ENCODE measurements at regions of chr6 and their contacts with region 1.

Region 1: GRCh38 chr6:142946181-142946923 is 1.4 kb upstream of the HIVEP2 start:
- DNase-seq: peak; percentile 81
- H3K4me3 Mint-ChIP-seq: peak overlapping the region; percentile 92
- H3K27ac Mint-ChIP-seq: peak overlapping the region; percentile 97
- H3K4me1 Mint-ChIP-seq: peaks cover 43% of the 10 kb centered on the region
- H3K27me3 Mint-ChIP-seq: peaks cover 6% of the 10 kb centered on the region

Region 2: GRCh38 chr6:142692942-142693341 is 253.4 kb before region 1 on chr6:
- intact Hi-C with region 1: loop called (anchors 1 kb)
- DNase-seq: peak; percentile 42
- H3K4me3 Mint-ChIP-seq: no peak overlapping the region
- H3K27ac Mint-ChIP-seq: no peak overlapping the region
- H3K4me1 Mint-ChIP-seq: peaks cover 22% of the 10 kb centered on the region
- H3K27me3 Mint-ChIP-seq: no peaks in the 10 kb centered on the region

Region 3: DNA sequence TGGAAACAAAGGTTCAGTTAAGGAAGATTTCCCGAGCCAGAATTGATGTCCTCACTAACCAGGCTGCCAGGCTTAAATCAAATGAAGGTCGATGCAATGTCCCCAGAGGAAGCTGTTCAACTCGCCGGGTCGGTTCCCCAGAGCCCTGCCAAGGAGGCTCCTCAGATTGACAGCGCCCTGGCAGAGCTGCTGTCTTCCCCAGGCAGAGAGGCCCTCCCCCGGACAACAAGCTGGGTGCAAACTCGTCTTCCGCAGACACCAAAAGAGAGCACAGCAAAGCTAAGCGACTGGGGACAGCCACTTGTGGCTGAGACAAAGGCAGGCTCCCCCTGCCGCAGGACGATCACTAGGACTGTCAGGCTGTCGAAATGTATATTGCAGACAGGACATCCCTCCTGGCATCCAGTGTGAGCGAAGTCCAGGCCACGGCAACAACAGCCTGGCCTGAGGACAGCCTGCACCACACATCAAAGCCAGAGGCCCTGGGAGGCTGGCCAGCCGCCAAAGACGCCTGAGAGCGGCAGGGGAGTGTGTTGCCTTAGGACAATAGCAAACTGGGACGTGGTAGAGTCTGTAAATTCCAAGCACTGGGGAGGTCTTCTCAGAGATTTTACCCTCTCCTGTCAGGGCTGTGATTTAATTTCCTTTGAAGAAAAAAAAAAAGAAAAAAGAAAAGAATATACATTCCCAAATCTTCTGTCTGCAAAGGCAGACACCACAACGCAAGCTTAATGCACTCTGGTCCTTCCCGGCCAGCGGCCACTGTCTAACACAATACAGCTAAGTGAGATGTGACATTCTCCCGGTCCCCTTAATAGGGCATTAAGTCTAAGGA is 100.5 kb before region 1 on chr6:
- intact Hi-C with region 1: loop called (anchors 1 kb)
- DNase-seq: peak; percentile 48
- H3K4me3 Mint-ChIP-seq: peak overlapping the region; percentile 81
- H3K27ac Mint-ChIP-seq: peak overlapping the region; percentile 91
- H3K4me1 Mint-ChIP-seq: peaks cover 91% of the 10 kb centered on the region
- H3K27me3 Mint-ChIP-seq: no peaks in the 10 kb centered on the region

Region 4: DNA sequence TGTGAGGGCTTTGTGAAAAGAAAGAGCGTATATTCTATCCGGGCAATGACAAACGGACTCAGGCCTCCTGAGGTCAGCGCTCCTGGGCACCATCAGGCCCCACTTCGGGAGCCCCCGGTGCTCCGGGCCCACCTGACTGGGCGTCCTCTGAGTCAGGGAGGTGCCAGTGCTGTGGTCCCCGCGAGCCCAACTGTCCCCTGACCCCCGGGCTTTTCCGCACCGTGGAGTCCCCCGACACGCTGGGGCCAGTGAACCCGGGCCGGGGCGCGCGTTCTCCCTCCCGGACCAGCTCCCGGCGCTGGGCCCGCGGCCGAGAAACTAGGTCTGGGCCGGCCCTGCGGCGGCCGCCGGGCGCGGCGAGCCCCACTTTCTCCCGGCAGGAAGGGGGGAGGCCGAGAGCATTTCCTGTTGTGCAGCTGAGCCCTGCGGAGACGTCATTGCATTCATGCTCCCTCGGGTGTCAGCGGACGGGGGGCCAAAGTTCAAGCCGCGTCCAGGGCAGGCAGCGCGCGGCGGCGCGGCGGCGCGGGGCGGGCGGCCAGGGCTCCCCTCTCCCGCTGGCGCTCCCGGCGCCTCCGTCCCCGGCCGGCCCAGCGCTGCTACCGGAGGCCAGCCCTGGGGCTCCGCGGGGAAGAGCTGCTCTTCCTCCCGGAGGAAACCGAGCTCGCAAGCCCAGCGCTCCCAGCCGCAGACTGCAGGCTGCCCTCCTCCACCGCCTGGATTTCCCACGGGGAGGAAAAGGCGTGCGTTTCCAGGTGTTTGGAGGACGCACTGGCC is 19.7 kb before region 1 on chr6:
- intact Hi-C with region 1: loop called (anchors 1 kb)
- DNase-seq: peak; percentile 76
- H3K4me3 Mint-ChIP-seq: peak overlapping the region; percentile 90
- H3K27ac Mint-ChIP-seq: peak overlapping the region; percentile 96
- H3K4me1 Mint-ChIP-seq: peaks cover 62% of the 10 kb centered on the region
- H3K27me3 Mint-ChIP-seq: no peaks in the 10 kb centered on the region

Region 5: GRCh38 chr6:143427109-143427817 is 480.9 kb after region 1 on chr6:
- intact Hi-C with region 1: loop called (anchors 5 kb)
- DNase-seq: peak; percentile 55
- H3K4me3 Mint-ChIP-seq: no peak overlapping the region
- H3K27ac Mint-ChIP-seq: no peak overlapping the region
- H3K4me1 Mint-ChIP-seq: no peaks in the 10 kb centered on the region
- H3K27me3 Mint-ChIP-seq: no peaks in the 10 kb centered on the region

Region 6: GRCh38 chr6:144063744-144064401 is 1117.5 kb after region 1 on chr6:
- intact Hi-C with region 1: loop called (anchors 5 kb)
- DNase-seq: peak; percentile 89
- H3K4me3 Mint-ChIP-seq: peak overlapping the region; percentile 83
- H3K27ac Mint-ChIP-seq: peak overlapping the region; percentile 82
- H3K4me1 Mint-ChIP-seq: peaks cover 44% of the 10 kb centered on the region
- H3K27me3 Mint-ChIP-seq: no peaks in the 10 kb centered on the region